ENCODE measurements at regions of chr11 and their contacts with region 1.

Region 1: GRCh38 chr11:47152953-47153950 is 23.4 kb downstream of the ARFGAP2 start:
- DNase-seq: peak; percentile 83

Region 2: GRCh38 chr11:46367244-46367915 is 785.9 kb before region 1 on chr11:
- in situ Hi-C with region 1: loop called (anchors 25 kb)
- DNase-seq: peak; percentile 69

Region 3: DNA sequence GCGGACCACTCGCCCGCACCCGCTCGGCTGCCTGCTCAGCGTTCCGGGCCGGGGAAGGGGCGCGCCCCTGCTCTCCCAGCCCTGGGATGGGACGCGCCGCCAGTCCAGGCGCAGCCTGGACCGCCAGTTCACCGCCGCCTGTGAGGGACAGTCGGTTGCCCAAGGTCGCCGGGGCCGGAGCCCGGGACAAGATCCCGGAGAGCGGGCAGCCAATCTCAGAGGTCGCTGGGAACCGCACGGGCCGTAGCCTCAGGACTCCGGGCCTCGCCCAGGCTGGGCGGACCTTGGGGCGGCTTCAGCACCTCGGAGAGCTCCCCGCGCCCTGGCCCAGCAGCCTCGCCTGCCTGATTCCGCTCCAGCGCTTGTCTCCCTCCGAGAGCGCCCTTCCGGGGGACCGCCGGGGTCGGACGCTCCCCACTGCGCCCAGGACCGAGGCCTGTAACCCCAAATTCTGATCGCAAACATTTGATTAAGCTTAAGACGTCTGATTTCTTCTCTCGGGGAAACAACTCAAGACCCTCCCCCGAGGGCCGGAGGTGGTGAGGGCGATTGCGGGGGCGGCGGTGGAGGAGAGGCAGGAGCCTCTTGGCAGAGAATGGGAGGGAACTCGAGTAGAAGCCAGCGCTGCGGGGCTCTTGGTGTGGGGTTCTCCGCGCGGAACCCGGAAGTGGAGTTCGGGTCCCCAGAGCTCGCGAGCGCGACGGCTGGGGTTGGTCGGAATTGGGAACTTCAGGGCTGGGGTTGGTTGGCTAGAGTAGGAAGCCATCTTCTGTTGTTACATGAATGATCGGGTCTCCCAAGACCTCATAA is 760.6 kb before region 1 on chr11:
- in situ Hi-C with region 1: no loop called
- DNase-seq: peak; percentile 89

Region 4: GRCh38 chr11:46675288-46675851 is 477.9 kb before region 1 on chr11:
- in situ Hi-C with region 1: loop called (anchors 25 kb)
- DNase-seq: no peak

Region 5: GRCh38 chr11:47269002-47269828 is 116.0 kb after region 1 on chr11:
- in situ Hi-C with region 1: loop called (anchors 25 kb)
- DNase-seq: peak; percentile 99

Measured in KBM-7 (cell line).